ENCODE measurements at regions of chr3 and their contacts with region 1.

Region 1: GRCh38 chr3:48013288-48013980 is 2.8 kb downstream of the MAP4 start:
- DNase-seq: no peak
- H3K4me3 ChIP-seq: peak overlapping the region; percentile 8 to 26 (median 20)
- H3K27ac ChIP-seq: peak overlapping the region; percentile 77 to 81 (median 78)
- H3K4me1 ChIP-seq: peaks cover 72 to 83% (median 78%) of the 10 kb centered on the region in 4 donors
- H3K27me3 ChIP-seq: no peaks in the 10 kb centered on the region
- CTCF ChIP-seq: no peak
- EP300 ChIP-seq: no peak
- POLR2A ChIP-seq: no peak

Region 2: GRCh38 chr3:47685037-47685436 is 328.4 kb before region 1 on chr3:
- intact Hi-C with region 1: no loop called
- DNase-seq: no peak
- H3K4me3 ChIP-seq: no peak overlapping the region
- H3K27ac ChIP-seq: no peak overlapping the region
- H3K4me1 ChIP-seq: no peaks in the 10 kb centered on the region
- H3K27me3 ChIP-seq: no peaks in the 10 kb centered on the region
- CTCF ChIP-seq: no peak
- EP300 ChIP-seq: no peak
- POLR2A ChIP-seq: no peak

Region 3: DNA sequence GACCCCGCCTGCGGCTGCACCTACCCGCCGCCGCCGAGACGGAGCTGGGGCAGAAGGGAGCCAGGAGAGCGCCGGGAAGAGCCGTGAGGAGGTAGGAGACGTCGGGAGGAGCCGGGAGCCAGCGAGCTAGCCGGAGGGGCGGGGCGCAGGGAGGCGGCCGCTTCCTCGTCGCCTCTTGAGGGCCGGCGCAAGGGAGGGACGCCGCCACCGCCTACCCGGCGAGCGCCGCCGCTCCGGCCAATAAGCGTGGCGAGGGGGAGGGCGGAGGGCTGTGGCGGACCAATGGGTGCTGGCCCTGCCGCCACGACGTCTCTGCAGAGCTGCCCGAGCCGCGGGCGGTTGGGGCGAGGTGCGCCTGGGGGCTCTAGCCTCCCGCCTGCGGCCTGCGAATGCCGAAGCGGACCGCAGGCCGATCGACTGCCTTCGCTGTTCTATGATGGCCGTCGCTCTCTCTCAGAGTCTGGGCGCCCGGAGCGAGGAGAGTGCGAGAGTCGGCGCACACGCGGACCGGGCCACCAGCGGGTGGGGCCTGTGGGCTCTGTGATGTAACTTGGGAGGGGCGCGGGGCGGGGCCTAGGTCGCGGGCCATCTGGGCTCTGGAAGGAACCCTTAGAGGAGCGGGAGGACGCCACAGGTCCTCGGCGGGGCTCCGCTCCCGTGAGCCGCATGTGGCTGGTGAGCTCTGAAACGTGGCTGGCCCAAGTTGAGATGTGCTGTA is 75.5 kb after region 1 on chr3:
- intact Hi-C with region 1: loop called (anchors 5 kb)
- DNase-seq: peak; percentile 99
- H3K4me3 ChIP-seq: peak overlapping the region; percentile 70 to 97 (median 91)
- H3K27ac ChIP-seq: peak overlapping the region; percentile 95 to 99 (median 99)
- H3K4me1 ChIP-seq: peaks cover 37 to 49% (median 43%) of the 10 kb centered on the region in 4 donors
- H3K27me3 ChIP-seq: no peaks in the 10 kb centered on the region
- CTCF ChIP-seq: peak in 1 of 3 experiments; percentile 27
- EP300 ChIP-seq: no peak
- POLR2A ChIP-seq: peak; percentile 52

Measured in esophagus muscularis mucosa (tissue), 4 donors.